MCF 10A (cell line): ENCODE measurements at regions of chr16 and their contacts with region 1.

Region 1: DNA sequence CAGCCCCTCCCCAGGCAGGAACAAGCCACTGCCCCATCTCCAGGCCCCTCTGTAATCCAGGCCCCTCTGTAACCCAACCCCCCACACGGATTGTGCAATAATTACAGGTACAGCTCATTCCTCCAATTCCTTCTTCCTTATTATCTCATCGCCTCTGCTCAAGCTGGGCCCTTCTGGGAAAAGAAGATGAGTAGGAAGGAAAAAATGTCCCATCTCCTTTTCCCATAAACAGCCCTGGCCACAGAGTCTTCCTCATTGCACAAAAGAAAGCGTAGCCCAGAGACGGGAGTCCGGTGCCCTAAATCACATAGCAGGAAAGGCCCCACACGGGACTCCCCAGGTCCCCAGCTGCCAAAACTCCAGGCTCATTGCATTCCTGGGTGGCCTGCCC is 3.6 kb upstream of the LITAFD start:
- DNase-seq: peak; percentile 84
- H3K4me3 Mint-ChIP-seq: no peak overlapping the region
- H3K27ac Mint-ChIP-seq: peak overlapping the region; percentile 25
- H3K4me1 Mint-ChIP-seq: peaks cover 12% of the 10 kb centered on the region
- H3K27me3 Mint-ChIP-seq: no peaks in the 10 kb centered on the region
- CTCF ChIP-seq: no peak

Region 2: DNA sequence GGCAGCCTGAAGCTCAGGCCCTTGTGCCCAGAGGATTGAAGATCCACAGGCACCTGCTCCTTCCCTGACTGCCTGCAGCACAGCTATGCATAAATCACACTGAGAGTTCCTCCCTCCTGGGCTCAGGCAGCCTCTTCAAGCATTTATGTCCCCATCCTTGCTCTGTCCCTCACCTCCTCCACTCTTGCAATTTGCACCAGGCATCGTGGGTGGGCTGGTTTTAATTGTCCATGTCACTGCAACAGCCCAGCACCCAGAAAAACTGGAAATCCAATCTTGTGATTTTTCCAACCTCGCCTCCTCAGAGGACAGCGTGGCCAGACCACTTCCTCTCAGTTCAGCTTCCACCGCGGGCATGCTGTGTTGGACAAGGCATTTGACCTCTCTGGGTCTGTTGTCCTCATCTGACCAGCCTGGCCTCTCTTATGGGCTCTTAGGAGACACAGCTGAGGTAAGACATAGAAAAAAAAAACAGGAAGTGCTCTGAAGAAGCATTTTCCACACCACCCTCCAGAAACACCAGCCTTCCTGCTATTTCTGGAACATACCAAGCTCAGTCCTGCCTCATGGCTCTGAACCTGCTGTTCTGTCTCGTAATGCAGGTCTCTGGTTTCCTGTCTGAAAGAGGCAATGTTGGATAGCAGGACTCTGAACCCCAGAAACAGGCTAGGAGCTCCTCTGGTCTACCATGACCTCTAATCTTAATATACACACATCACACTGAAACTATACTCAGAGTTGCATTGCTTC is 296.5 kb before region 1 on chr16:
- CTCF ChIA-PET with region 1: no interaction called
- POLR2A ChIA-PET with region 1: no interaction called
- intact Hi-C with region 1: no loop called
- DNase-seq: no peak
- H3K4me3 Mint-ChIP-seq: no peak overlapping the region
- H3K27ac Mint-ChIP-seq: no peak overlapping the region
- H3K4me1 Mint-ChIP-seq: no peaks in the 10 kb centered on the region
- H3K27me3 Mint-ChIP-seq: peaks cover under 1% of the 10 kb centered on the region
- CTCF ChIP-seq: no peak

Region 3: GRCh38 chr16:8655184-8655717 is 223.3 kb before region 1 on chr16:
- CTCF ChIA-PET with region 1: interaction called, 30 read pairs
- POLR2A ChIA-PET with region 1: no interaction called
- intact Hi-C with region 1: no loop called
- DNase-seq: peak; percentile 66
- H3K4me3 Mint-ChIP-seq: no peak overlapping the region
- H3K27ac Mint-ChIP-seq: no peak overlapping the region
- H3K4me1 Mint-ChIP-seq: no peaks in the 10 kb centered on the region
- H3K27me3 Mint-ChIP-seq: no peaks in the 10 kb centered on the region
- CTCF ChIP-seq: peak; percentile 36

Region 4: DNA sequence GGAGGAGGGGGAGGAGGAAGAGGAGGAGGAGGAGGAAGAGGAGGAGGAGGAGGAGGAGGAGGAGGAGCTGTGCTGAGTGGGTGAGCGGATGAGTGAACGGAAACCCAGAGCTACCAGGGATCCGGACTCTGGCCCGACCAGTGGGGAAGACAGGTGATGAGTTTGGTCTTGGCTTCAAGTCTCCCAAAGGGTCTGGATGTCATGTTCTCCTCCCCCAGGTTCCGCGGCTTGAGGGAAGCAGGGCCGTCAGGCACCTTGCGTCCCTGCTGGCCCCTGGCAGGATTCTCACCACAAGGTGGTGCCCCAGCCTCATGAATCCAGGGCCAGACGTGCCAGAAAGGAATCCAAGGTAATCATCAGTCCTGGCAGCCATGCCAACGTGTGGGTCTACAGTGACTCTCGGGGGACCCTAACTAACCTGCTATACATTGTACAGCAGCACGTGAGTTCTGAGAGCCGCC is 217.6 kb before region 1 on chr16:
- CTCF ChIA-PET with region 1: interaction called, 30 read pairs
- POLR2A ChIA-PET with region 1: interaction called, 3 read pairs
- intact Hi-C with region 1: loop called (anchors 1 kb)
- DNase-seq: peak; percentile 75
- H3K4me3 Mint-ChIP-seq: no peak overlapping the region
- H3K27ac Mint-ChIP-seq: no peak overlapping the region
- H3K4me1 Mint-ChIP-seq: no peaks in the 10 kb centered on the region
- H3K27me3 Mint-ChIP-seq: no peaks in the 10 kb centered on the region
- CTCF ChIP-seq: peak; percentile 82

Region 5: DNA sequence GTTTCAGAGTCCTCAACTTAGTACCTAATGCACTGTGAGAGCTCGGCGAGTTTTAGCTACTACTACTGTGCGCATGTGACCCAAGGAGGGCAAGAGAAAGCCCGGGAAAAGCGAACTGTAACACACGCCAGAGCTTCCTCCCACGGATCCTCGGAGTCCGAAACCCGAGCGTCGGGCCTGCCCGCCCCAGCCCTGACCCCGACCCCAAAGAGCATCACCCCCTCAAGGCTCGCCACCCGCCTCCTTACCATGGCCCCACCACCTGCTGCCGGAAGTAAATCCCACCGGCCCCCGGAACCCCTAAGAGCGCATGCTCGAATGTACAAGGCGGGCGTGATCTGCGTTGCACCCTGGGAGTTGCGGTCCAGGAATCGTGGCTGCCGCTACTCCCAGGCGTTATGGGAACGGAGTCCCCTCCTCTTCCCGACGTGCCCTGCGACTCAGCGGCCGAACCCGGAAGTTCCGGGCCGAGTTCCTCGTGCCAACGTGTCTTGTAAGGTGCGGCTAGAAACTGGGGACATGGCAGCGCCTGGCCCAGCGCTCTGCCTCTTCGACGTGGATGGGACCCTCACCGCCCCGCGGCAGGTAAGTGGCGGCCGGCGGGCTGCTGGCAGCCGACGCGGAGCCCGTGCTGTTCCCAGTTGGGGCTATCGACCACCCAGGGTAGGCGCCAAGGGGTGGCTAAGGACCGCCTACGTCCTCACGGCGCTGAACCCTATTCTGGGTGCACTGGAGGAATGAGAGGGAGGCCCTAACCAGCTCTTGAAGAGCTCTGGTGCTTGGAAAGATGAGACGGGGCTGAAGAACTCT is 80.9 kb before region 1 on chr16 and contains the starts of genes PMM2 and TMEM186:
- CTCF ChIA-PET with region 1: interaction called, 7 read pairs
- POLR2A ChIA-PET with region 1: interaction called, 5 read pairs
- intact Hi-C with region 1: loop called (anchors 2 kb)
- DNase-seq: peak; percentile 96
- H3K4me3 Mint-ChIP-seq: peak within 1 kb of the TSS; percentile 92
- H3K27ac Mint-ChIP-seq: peak within 1 kb of the TSS; percentile 97
- H3K4me1 Mint-ChIP-seq: peaks cover 9% of the 10 kb centered on the region
- H3K27me3 Mint-ChIP-seq: no peaks in the 10 kb centered on the region
- CTCF ChIP-seq: no peak
- total RNA-seq, gene PMM2: 59.4 and 60.6 TPM in 2 replicates
- total RNA-seq, gene TMEM186: 12.9 and 13.9 TPM in 2 replicates

Region 6: GRCh38 chr16:8855011-8855786 is 23.3 kb before region 1 on chr16:
- CTCF ChIA-PET with region 1: interaction called, 31 read pairs
- POLR2A ChIA-PET with region 1: no interaction called
- intact Hi-C with region 1: no loop called
- DNase-seq: no peak
- H3K4me3 Mint-ChIP-seq: no peak overlapping the region
- H3K27ac Mint-ChIP-seq: no peak overlapping the region
- H3K4me1 Mint-ChIP-seq: peaks cover 13% of the 10 kb centered on the region
- H3K27me3 Mint-ChIP-seq: no peaks in the 10 kb centered on the region
- CTCF ChIP-seq: peak; percentile 23

Region 7: GRCh38 chr16:8892101-8892575 is 13.6 kb after region 1 on chr16:
- CTCF ChIA-PET with region 1: interaction called, 56 read pairs
- POLR2A ChIA-PET with region 1: interaction called, 3 read pairs
- intact Hi-C with region 1: no loop called
- DNase-seq: no peak
- H3K4me3 Mint-ChIP-seq: no peak overlapping the region
- H3K27ac Mint-ChIP-seq: peak overlapping the region; percentile 42
- H3K4me1 Mint-ChIP-seq: peaks cover 4% of the 10 kb centered on the region
- H3K27me3 Mint-ChIP-seq: no peaks in the 10 kb centered on the region
- CTCF ChIP-seq: no peak

Region 8: DNA sequence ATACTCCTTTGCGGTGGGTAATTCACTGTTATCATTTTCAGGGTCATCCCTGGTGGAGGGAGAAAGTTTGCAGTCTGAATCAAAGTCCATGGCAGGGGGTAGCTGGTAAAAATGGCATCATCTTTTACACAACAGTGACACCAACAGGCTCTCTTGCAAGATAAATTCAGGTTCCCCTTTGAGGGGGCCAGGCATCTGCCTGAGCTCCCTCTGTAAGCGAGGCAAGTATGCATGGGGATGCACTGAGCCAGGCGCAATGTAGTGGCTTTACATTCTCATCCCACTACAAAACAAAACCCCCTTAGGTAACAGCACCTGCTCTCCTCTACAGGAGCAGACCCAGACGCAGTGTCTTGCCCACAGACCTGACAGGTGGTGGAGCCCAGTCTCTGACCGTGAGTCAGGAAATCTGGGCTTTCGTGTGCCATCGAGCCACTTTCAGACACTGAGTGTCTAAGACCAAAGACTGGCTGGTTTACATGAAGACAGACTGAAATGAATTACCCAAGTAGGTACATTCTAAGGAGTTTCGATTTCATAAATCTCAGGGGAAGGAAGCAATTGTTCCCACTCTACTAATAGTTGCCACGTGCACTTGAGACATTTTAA is 21.3 kb after region 1 on chr16:
- CTCF ChIA-PET with region 1: interaction called, 16 read pairs
- POLR2A ChIA-PET with region 1: no interaction called
- intact Hi-C with region 1: no loop called
- DNase-seq: no peak
- H3K4me3 Mint-ChIP-seq: no peak overlapping the region
- H3K27ac Mint-ChIP-seq: no peak overlapping the region
- H3K4me1 Mint-ChIP-seq: no peaks in the 10 kb centered on the region
- H3K27me3 Mint-ChIP-seq: no peaks in the 10 kb centered on the region
- CTCF ChIP-seq: no peak